Activated B cell treated with CpG ODN at 0.5 μM for 24 hours (primary cell): ENCODE measurements at regions of chr11 and their contacts with region 1.

Region 1: DNA sequence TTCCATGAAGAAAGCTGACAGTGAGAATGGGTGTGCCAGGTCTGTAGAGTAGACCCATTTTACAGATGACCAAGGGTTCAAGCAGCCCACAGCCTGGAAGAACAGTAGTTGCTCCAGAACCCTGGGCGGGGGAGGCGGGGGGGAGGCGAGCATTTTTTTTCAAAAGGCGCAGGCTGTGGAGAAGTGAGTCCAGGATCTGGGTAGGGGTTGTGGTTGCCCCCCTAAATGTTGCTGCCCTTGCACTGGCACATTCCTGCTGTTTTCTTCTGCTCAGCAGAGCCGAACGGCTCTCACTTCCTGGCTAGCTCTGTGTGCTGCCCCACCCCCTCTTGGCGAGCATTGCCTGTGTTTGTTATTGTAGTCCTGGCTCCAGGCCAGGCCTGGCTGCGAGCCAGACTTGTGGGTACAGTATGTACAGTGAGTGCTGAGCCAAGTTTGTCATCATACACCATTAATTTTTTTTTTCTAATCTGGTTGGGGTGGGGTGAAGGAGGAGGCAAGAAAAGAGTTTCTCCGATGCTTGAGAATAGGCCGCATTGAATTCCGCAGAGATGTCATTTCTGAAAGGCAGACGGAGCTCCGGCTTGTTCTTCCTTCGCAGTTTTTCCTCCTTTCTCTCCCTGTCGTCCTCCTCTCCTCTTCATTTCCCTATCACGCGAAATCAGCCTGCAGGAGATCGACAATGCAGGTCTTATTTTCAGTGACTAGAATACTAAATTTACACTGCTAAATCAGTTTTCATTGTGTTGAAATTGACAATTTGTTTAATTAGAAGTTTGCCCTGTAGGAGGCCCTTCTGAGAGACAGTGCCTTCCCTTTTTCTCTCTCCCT is 100.5 kb downstream of the ZBTB16 start:
- DNase-seq: peak; percentile 79
- ATAC-seq: peak; percentile 95
- H3K4me3 Mint-ChIP-seq: peak overlapping the region; percentile 62
- H3K27ac Mint-ChIP-seq: peak overlapping the region; percentile 82
- H3K4me1 Mint-ChIP-seq: peaks cover 72% of the 10 kb centered on the region
- H3K27me3 Mint-ChIP-seq: no peaks in the 10 kb centered on the region
- CTCF ChIP-seq: no peak

Region 2: GRCh38 chr11:114187173-114187572 is 27.2 kb after region 1 on chr11:
- CTCF ChIA-PET with region 1: interaction called, 4 read pairs
- POLR2A ChIA-PET with region 1: interaction called, 12 read pairs
- intact Hi-C with region 1: loop called (anchors 2 kb)
- DNase-seq: no peak
- ATAC-seq: peak; percentile 82
- H3K4me3 Mint-ChIP-seq: peak overlapping the region; percentile 55
- H3K27ac Mint-ChIP-seq: peak overlapping the region; percentile 94
- H3K4me1 Mint-ChIP-seq: peaks cover 69% of the 10 kb centered on the region
- H3K27me3 Mint-ChIP-seq: no peaks in the 10 kb centered on the region
- CTCF ChIP-seq: no peak

Region 3: GRCh38 chr11:114257621-114258558 is 97.9 kb after region 1 on chr11:
- CTCF ChIA-PET with region 1: interaction called, 16 read pairs
- POLR2A ChIA-PET with region 1: interaction called, 13 read pairs
- intact Hi-C with region 1: loop called (anchors 1 kb)
- DNase-seq: no peak
- ATAC-seq: no peak
- H3K4me3 Mint-ChIP-seq: peak overlapping the region; percentile 55
- H3K27ac Mint-ChIP-seq: peak overlapping the region; percentile 89
- H3K4me1 Mint-ChIP-seq: peaks cover 31% of the 10 kb centered on the region
- H3K27me3 Mint-ChIP-seq: no peaks in the 10 kb centered on the region
- CTCF ChIP-seq: no peak

Region 4: GRCh38 chr11:114400217-114400914 is 240.3 kb after region 1 on chr11 and contains the starts of genes C11orf71 and RBM7:
- CTCF ChIA-PET with region 1: no interaction called
- POLR2A ChIA-PET with region 1: no interaction called
- intact Hi-C with region 1: loop called (anchors 10 kb)
- DNase-seq: peak; percentile 93
- ATAC-seq: peak; percentile 93
- H3K4me3 Mint-ChIP-seq: peak within 1 kb of the TSS; percentile 96
- H3K27ac Mint-ChIP-seq: peak within 1 kb of the TSS; percentile 98
- H3K4me1 Mint-ChIP-seq: peaks cover 50% of the 10 kb centered on the region
- H3K27me3 Mint-ChIP-seq: no peaks in the 10 kb centered on the region
- CTCF ChIP-seq: no peak
- total RNA-seq, gene C11orf71: 9.5 and 11.1 TPM in 2 replicates
- total RNA-seq, gene RBM7: 33.6 and 34.1 TPM in 2 replicates

Region 5: GRCh38 chr11:115476463-115477286 is 1316.7 kb after region 1 on chr11:
- CTCF ChIA-PET with region 1: no interaction called
- POLR2A ChIA-PET with region 1: no interaction called
- intact Hi-C with region 1: no loop called
- DNase-seq: no peak
- ATAC-seq: no peak
- H3K4me3 Mint-ChIP-seq: no peak overlapping the region
- H3K27ac Mint-ChIP-seq: no peak overlapping the region
- H3K4me1 Mint-ChIP-seq: no peaks in the 10 kb centered on the region
- H3K27me3 Mint-ChIP-seq: peaks cover 2% of the 10 kb centered on the region
- CTCF ChIP-seq: no peak